ENCODE measurements at regions of chr10 and their contacts with region 1.

Region 1: GRCh38 chr10:57716886-57717285 is 550.8 kb downstream of the IPMK start:
- DNase-seq: no peak
- H3K4me3 ChIP-seq: no peak overlapping the region
- H3K27ac ChIP-seq: no peak overlapping the region
- H3K4me1 ChIP-seq: no peaks in the 10 kb centered on the region
- H3K27me3 ChIP-seq: no peaks in the 10 kb centered on the region
- CTCF ChIP-seq: peak; percentile 63

Region 2: GRCh38 chr10:57593983-57594573 is 122.8 kb before region 1 on chr10:
- CTCF ChIA-PET with region 1: no interaction called
- POLR2A ChIA-PET with region 1: no interaction called
- intact Hi-C with region 1: no loop called
- DNase-seq: no peak
- H3K4me3 ChIP-seq: no peak overlapping the region
- H3K27ac ChIP-seq: no peak overlapping the region
- H3K4me1 ChIP-seq: no peaks in the 10 kb centered on the region
- H3K27me3 ChIP-seq: no peaks in the 10 kb centered on the region
- CTCF ChIP-seq: peak; percentile 57

Region 3: GRCh38 chr10:57806675-57807074 is 89.8 kb after region 1 on chr10:
- CTCF ChIA-PET with region 1: no interaction called
- POLR2A ChIA-PET with region 1: no interaction called
- intact Hi-C with region 1: no loop called
- DNase-seq: no peak
- H3K4me3 ChIP-seq: no peak overlapping the region
- H3K27ac ChIP-seq: no peak overlapping the region
- H3K4me1 ChIP-seq: no peaks in the 10 kb centered on the region
- H3K27me3 ChIP-seq: no peaks in the 10 kb centered on the region
- CTCF ChIP-seq: no peak

Region 4: GRCh38 chr10:57849691-57850357 is 132.9 kb after region 1 on chr10:
- CTCF ChIA-PET with region 1: no interaction called
- POLR2A ChIA-PET with region 1: no interaction called
- intact Hi-C with region 1: loop called (anchors 1 kb)
- DNase-seq: no peak
- H3K4me3 ChIP-seq: no peak overlapping the region
- H3K27ac ChIP-seq: no peak overlapping the region
- H3K4me1 ChIP-seq: no peaks in the 10 kb centered on the region
- H3K27me3 ChIP-seq: no peaks in the 10 kb centered on the region
- CTCF ChIP-seq: peak; percentile 75

Region 5: DNA sequence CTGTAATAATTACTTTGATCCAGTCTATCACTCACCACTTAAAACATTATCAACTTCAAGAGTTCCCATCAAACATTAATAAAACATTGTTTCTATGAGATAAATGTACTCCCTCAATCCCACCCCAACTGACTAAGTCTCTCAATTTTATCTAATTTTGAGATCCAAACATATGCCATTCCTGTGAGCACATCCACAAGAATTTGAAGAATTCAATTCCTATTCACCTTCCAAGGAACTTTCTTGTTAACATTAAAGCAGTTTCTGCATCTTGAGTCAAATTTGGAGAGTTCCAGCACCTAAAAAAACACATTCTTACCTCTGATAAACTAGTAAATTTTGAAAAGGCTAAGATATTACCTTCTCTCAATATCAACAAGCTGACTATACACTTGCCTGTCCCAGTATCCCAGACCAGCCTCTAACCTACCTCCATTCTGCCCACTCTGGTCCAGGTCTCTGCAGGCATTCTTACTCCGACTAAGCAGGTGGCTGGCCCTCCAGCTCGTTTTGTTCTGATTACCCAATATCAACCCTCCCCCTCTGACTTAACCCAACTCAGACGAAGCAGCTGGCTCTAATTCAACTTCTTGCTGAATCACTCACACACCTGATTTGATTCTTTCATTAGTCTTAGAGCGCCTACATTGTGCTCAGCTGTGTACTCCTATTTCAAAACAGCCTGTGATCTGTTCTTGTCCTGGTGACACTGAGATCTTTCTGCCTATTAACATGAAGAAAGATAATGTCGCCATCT is 275.6 kb after region 1 on chr10:
- CTCF ChIA-PET with region 1: no interaction called
- POLR2A ChIA-PET with region 1: no interaction called
- intact Hi-C with region 1: loop called (anchors 10 kb)
- DNase-seq: peak; percentile 41 to 43
- H3K4me3 ChIP-seq: no peak overlapping the region
- H3K27ac ChIP-seq: no peak overlapping the region
- H3K4me1 ChIP-seq: 0 out of 2 replicates have a peak, but pooled peaks cover 9% of the 10 kb centered on the region
- H3K27me3 ChIP-seq: no peaks in the 10 kb centered on the region
- CTCF ChIP-seq: no peak

Region 6: DNA sequence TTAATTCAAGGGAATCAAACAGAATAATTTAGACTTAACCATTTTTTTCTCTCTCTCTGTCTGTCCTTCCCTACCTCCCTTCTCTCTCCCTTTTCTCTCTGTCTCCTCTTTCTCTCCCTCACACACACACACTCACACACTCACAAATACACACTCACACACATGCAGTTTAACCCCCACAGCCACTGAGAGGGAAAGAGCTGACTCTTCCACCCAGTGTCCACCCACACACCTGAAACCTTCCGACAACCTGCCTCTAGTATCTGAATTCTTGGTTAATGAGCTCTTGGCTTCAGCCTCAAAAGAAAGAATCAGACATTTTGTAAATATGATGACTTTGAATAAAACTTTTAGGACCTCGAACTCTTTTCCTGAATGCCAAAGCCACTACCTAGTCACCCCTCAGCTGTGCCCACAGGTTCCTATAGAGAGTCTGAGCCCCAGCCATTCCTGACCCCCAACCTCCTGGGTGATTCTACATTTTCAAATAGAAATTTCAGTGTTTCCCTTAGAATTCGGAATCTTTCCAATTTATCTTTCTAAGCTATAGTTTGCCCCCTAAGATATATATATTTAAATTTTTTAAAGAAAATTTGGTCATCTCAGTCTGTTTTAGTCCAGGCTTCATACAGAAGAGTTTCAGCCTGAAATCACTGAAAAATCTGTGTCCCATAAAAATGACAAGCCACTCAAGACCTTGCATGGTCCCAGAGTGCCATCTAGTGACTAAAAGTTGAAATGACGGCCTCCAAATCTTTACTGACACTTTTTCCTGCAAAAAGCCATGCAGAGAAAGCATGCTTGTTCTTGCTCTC is 348.0 kb after region 1 on chr10:
- CTCF ChIA-PET with region 1: no interaction called
- POLR2A ChIA-PET with region 1: no interaction called
- intact Hi-C with region 1: loop called (anchors 1 kb)
- DNase-seq: peak in 1 of 2 experiments; percentile 22
- H3K4me3 ChIP-seq: no peak overlapping the region
- H3K27ac ChIP-seq: no peak overlapping the region
- H3K4me1 ChIP-seq: no peaks in the 10 kb centered on the region
- H3K27me3 ChIP-seq: no peaks in the 10 kb centered on the region; the same call in 1 of the 2 replicates
- CTCF ChIP-seq: peak; percentile 86

Region 7: GRCh38 chr10:58152673-58153263 is 435.9 kb after region 1 on chr10:
- CTCF ChIA-PET with region 1: no interaction called
- POLR2A ChIA-PET with region 1: no interaction called
- intact Hi-C with region 1: loop called (anchors 5 kb)
- DNase-seq: peak in 1 of 2 experiments; percentile 45
- H3K4me3 ChIP-seq: no peak overlapping the region
- H3K27ac ChIP-seq: no peak overlapping the region
- H3K4me1 ChIP-seq: no peaks in the 10 kb centered on the region
- H3K27me3 ChIP-seq: no peaks in the 10 kb centered on the region
- CTCF ChIP-seq: peak; percentile 72